ENCODE measurements at regions of chrX and their contacts with region 1.

Region 1: DNA sequence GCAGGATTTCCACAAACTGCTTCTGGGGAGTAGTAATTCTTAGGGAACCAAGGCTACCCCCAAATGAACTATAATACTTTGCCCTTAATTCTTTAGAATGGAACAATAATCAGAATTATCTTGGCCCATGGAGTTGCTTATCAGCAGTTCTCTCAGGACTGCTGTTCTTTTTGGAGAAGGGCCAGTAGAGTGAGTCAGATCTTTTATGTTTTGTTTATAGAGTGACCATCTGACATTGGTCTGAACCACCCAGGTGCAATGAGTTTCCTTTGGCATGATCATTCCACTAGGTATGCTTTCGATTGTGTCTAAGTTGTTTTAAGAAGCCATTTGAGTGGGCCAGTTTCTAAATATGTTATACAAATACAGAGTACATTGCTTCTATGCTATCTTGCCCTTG is 31.8 kb downstream of the PRRG1 start:
- DNase-seq: peak in 2 of 4 experiments; percentile 36 to 60
- ATAC-seq: peak; percentile 84
- H3K4me3 ChIP-seq: no peak overlapping the region
- H3K27ac ChIP-seq: no peak overlapping the region
- H3K4me1 ChIP-seq: no peaks in the 10 kb centered on the region; a peak in 2 of 5 replicates
- H3K27me3 ChIP-seq: no peaks in the 10 kb centered on the region
- CTCF ChIP-seq: no peak
- EP300 ChIP-seq: peak; percentile 45
- POLR2A ChIP-seq: no peak
- RAD21 ChIP-seq: no peak

Region 2: DNA sequence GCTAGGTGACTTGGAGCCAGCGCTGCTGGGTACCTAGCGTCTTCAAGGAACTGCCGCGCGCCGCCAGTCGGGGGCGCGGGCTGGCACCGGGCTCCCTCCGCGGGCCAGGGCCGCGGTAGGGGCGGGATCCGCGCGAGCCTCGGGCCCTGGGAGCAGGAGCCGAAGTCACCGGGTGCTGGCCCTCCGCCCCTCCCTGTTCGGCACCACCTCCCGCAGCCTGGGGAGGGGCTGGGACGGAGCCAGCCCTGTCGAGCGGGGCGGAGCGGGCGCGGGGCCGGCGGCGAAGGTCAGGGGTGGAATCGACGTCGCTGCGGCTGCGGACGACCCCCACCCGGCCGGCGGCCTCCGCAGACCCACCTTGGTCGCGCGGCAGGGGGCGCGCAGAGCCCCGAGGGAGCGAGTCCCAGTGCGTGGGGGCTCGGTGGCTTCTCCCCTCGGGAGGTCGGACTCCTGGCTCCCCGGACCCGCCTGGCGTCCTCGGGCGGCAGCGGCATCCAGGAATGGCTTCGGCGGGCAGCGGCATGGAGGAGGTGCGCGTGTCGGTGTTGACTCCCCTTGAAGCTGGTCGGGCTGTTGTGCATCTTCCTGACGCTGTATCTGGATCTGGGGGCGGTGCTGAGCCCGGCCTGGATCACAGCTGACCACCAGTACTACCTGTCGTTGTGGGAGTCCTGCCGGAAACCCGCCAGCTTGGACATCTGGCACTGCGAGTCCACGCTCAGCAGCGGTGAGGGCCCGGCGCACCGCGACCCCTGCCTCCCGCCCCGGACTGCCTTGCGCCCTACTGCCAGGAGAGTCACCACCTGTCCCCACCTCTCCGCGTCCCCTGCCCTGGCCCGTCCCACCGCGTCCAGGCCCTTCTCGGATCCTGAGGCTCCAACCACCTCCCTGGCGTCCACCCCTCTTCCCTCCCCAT is 423.2 kb before region 1 on chrX:
- CTCF ChIA-PET with region 1: no interaction called
- POLR2A ChIA-PET with region 1: no interaction called
- in situ Hi-C with region 1: no loop called
- intact Hi-C with region 1: no loop called
- DNase-seq: no peak
- ATAC-seq: no peak
- H3K4me3 ChIP-seq: no peak overlapping the region
- H3K27ac ChIP-seq: no peak overlapping the region
- H3K4me1 ChIP-seq: no peaks in the 10 kb centered on the region
- H3K27me3 ChIP-seq: no peaks in the 10 kb centered on the region
- CTCF ChIP-seq: no peak
- EP300 ChIP-seq: no peak
- POLR2A ChIP-seq: no peak
- RAD21 ChIP-seq: no peak

Region 3: DNA sequence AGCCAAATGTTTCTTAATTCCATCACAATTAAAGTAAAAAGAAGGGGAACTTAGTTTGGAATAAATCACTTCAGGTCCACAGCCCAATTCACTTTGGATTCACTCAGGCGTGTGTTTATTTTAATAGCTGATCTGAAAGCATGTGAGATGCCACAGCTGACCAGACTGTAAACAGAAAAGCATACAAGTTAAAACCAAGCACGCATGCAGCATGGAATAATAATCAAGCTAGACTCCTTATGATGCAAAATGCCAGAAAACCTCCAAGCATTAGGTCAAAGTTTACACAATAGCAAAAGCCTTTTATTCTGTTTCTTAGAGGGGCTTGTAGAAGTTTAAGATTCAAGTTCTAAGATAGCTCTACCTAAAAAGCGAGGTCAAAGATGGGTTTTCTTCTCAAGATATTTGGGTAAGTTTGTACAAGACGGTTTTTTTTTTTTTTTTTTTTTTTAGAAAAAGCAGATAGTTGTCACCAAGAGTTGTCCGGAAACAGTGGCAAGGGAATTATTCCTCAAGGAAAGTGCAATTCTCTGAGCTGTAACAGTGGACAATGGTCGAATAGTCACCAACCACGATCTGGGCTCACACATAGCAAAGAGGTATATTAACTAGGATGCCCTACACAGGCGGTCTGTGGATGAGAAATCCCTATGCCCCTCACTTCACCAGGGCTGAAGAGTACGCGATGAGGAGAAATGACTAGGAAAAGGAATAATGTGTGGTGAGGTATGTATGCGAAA is 32.5 kb before region 1 on chrX:
- CTCF ChIA-PET with region 1: no interaction called
- POLR2A ChIA-PET with region 1: no interaction called
- in situ Hi-C with region 1: no loop called
- intact Hi-C with region 1: loop called (anchors 1 kb)
- DNase-seq: no peak
- ATAC-seq: peak; percentile 10; the same call in 2 of the 3 replicates
- H3K4me3 ChIP-seq: peak overlapping the region; percentile 57
- H3K27ac ChIP-seq: no peak overlapping the region
- H3K4me1 ChIP-seq: peaks cover 0 to 8% of the 10 kb centered on the region in 2 experiments; a peak in 3 of 5 replicates
- H3K27me3 ChIP-seq: no peaks in the 10 kb centered on the region; a peak in 1 of 5 replicates
- CTCF ChIP-seq: no peak
- EP300 ChIP-seq: no peak
- POLR2A ChIP-seq: no peak
- RAD21 ChIP-seq: no peak